Activated T-helper 2 cell treated with anti-CD3 and anti-CD28 coated beads, Interferon-gamma antibody, Interleukin-2, Interleukin-4, amounts not matched to agents 10 μg/mL and 5 μg/mL and 100 μg/mL, durations not matched to agents 14 hours and 24 hours and 36 hours (primary cell): ENCODE measurements at regions of chr3 and their contacts with region 1.

Region 1: GRCh38 chr3:120795017-120795648 is 52.6 kb downstream of the GTF2E1 start:
- DNase-seq: peak; percentile 70
- H3K4me3 Mint-ChIP-seq: no peak overlapping the region
- H3K27ac Mint-ChIP-seq: no peak overlapping the region
- H3K4me1 Mint-ChIP-seq: no peaks in the 10 kb centered on the region
- H3K27me3 Mint-ChIP-seq: no peaks in the 10 kb centered on the region

Region 2: DNA sequence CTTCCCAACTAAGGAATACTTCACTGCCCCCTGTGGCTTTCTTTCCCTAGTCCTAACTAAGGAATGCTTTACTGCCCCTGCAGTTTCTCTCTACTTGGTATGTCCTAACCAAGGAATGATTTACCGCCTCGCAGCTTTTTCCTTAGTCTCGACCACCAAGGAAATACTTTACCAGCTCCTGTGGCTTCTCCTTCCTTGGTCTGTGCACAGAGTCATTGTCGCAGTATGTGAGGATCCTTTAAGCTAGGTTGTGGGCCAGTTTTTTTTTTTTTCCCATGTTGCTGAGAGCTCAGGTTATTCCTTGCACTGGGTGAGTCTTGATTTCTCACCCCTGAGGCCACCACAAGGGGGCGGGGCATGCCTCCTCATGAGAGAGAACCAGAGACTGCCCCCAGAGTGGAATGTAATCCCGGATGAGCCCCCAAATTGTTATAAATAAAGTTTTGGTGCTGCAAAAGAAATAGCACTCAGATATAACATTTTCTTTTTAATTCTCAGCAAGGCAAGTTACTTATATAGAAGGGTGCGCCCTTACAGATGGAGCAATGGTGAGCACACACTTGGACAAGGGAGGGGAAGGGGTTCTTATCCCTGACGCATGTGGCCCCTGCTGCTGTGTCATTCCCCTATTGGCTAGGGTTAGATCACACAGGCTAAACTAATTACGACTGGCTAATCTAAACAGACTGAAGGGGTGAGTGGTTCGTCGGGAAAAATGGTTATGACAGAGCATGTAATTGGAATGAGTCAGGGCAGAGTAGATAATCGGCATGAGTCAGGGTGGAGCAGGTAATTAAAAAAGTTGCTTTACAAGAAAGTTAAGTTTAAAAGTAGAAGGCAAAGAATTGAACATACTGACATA is 172.0 kb before region 1 on chr3:
- intact Hi-C with region 1: loop called (anchors 2 kb)
- DNase-seq: no peak
- H3K4me3 Mint-ChIP-seq: no peak overlapping the region
- H3K27ac Mint-ChIP-seq: no peak overlapping the region
- H3K4me1 Mint-ChIP-seq: no peaks in the 10 kb centered on the region
- H3K27me3 Mint-ChIP-seq: no peaks in the 10 kb centered on the region

Region 3: GRCh38 chr3:120753831-120754230 is 41.3 kb before region 1 on chr3:
- intact Hi-C with region 1: no loop called
- DNase-seq: no peak
- H3K4me3 Mint-ChIP-seq: no peak overlapping the region
- H3K27ac Mint-ChIP-seq: no peak overlapping the region
- H3K4me1 Mint-ChIP-seq: peaks cover 5% of the 10 kb centered on the region
- H3K27me3 Mint-ChIP-seq: no peaks in the 10 kb centered on the region

Region 4: DNA sequence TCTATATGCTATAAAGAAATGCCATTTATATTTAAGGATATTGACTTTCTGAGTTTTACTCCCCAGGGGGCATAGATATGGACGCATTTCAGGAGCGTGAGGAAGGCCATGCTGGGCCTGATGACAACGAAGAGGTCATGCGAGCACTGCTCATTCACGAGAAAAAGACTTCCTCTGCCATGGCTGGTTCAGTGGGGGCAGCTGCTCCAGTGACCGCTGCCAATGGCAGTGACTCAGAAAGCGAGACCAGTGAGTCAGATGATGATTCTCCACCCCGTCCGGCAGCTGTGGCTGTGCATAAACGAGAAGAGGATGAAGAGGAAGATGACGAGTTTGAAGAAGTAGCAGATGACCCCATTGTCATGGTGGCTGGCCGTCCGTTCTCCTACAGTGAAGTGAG is 14.2 kb before region 1 on chr3:
- intact Hi-C with region 1: no loop called
- DNase-seq: no peak
- H3K4me3 Mint-ChIP-seq: no peak overlapping the region
- H3K27ac Mint-ChIP-seq: no peak overlapping the region
- H3K4me1 Mint-ChIP-seq: peaks cover 4% of the 10 kb centered on the region
- H3K27me3 Mint-ChIP-seq: no peaks in the 10 kb centered on the region

Region 5: DNA sequence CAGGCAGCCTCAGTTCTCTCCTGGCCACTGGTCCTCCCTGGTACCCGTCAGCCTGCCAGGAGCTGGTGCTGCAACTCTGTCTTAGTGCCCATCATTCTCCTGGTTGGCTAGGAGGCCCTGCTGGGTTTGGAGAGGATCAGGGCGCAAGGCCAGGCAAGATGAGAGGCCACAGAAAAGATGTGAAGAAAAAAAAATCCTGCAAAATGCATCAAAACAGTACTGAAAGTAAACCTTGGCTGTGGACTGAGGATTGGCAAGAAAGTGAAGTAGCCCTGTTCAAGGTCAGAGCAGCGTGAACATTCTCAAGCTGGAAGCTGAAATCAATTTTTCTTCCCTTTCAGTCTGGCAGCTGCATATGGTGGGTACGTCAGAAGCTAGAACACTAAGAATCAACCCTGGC is 21.6 kb after region 1 on chr3:
- intact Hi-C with region 1: no loop called
- DNase-seq: no peak
- H3K4me3 Mint-ChIP-seq: no peak overlapping the region
- H3K27ac Mint-ChIP-seq: no peak overlapping the region
- H3K4me1 Mint-ChIP-seq: no peaks in the 10 kb centered on the region
- H3K27me3 Mint-ChIP-seq: peaks cover 14% of the 10 kb centered on the region

Region 6: DNA sequence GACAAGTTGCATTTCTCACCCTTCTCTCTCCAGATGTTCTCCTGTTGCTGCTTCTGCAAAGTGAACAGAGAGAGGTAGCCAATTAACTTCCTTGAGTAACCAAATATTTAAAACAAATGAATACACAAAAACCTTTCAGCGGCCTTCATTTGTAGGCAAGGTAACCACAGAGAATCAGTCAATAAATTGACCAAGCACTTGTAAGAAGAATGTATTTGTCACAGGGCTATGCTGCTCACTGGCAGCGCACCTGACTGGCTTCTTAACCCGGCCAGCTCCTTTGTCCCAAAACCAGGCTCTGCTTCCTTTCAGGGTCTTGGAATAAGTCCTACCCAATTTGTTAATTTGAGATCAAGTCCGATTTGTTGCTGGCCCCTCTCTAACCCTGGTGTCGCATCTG is 69.4 kb after region 1 on chr3:
- intact Hi-C with region 1: no loop called
- DNase-seq: no peak
- H3K4me3 Mint-ChIP-seq: no peak overlapping the region
- H3K27ac Mint-ChIP-seq: no peak overlapping the region
- H3K4me1 Mint-ChIP-seq: no peaks in the 10 kb centered on the region
- H3K27me3 Mint-ChIP-seq: no peaks in the 10 kb centered on the region